HEK293T (cell line): ENCODE measurements at regions of chr2 and their contacts with region 1.

Region 1: GRCh38 chr2:113198790-113199612 is 25.2 kb downstream of the PSD4 start:
- DNase-seq: peak; percentile 89

Region 2: GRCh38 chr2:113080134-113080533 is 118.9 kb before region 1 on chr2:
- CTCF ChIA-PET with region 1: interaction called, 31 read pairs
- POLR2A ChIA-PET with region 1: interaction called, 8 read pairs
- DNase-seq: peak; percentile 65

Region 3: DNA sequence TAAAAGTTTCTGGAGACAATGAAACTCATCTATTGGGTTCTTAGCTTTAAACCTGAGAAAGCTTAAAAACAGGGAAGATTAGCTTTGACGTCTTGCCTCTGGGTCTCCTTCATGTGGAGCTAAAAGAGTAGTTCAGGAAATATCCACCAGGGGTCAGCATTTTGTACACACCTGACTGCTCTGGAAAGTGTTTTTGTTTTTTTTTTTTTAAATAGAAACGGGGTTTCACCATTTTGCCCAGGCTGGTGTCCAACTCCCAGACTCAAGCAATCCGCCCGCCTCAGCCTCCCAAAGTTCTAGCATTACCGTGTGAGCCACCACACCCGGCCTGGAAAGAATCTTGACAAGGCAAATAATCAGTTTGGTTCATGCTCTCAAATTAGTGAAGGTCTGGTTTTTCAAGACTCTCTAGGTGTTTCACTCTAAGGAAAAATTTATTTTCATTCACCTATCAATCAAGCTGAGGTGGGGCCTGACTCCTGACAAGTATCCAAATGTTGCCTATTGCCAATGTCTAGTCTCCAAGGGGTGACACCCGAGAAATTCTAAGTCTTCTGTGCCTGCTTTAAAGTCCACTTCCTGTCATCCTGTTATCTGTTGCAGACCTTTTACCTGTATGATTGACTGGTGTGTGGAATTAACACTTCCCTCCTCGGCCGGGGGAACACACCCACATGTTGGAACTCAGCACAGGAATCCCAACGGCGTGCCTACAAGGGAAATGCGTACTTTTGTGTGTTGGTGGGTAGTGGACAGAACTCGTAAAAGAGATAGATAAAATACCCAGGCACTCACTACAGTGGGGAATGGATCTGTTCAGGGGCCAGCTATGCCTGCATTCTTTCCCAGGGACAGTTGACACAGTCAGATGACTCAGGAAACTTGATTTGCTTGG is 60.3 kb before region 1 on chr2:
- CTCF ChIA-PET with region 1: interaction called, 62 read pairs
- POLR2A ChIA-PET with region 1: interaction called, 8 read pairs
- DNase-seq: peak; percentile 68

Region 4: DNA sequence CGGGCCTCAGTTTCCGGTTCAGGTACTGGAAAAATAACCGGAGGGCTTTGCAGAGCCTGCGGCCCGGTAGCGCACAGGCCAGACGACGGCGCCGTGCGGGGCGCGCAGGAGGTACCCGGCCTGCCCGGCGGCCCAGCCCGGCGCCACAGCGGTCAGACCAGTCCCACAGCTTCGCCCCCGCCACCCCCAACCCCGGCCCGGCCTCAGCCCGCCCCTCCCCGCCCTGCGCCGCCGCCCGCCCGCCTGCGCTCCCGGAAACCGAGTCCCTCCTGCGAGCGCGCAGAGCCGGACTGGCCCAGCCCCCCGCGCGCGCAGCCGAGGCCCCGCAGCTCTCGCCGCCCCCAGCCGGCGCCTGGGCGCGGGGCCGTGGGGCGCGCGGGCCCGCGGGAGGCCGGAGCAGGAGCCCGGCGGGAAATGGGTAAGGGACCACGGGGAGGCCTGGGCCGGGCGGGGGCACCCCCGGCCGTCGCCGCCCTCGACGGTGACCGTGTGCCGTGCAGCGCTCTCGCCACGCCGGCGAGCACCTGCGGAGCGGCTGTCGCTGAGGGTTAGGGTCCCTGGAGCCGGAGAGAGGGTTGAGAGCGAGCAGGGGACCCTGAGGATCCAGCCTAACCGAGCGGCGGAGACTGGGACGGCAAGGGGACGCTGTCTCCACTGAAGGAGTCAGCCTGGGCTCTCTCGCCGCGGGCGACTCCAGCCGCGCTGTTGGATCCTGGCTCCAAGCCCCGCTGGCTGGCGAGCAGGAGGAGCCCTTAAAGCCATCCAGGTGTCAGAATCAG is 41.7 kb before region 1 on chr2:
- CTCF ChIA-PET with region 1: interaction called, 19 read pairs
- POLR2A ChIA-PET with region 1: no interaction called
- DNase-seq: peak; percentile 59

Region 5: DNA sequence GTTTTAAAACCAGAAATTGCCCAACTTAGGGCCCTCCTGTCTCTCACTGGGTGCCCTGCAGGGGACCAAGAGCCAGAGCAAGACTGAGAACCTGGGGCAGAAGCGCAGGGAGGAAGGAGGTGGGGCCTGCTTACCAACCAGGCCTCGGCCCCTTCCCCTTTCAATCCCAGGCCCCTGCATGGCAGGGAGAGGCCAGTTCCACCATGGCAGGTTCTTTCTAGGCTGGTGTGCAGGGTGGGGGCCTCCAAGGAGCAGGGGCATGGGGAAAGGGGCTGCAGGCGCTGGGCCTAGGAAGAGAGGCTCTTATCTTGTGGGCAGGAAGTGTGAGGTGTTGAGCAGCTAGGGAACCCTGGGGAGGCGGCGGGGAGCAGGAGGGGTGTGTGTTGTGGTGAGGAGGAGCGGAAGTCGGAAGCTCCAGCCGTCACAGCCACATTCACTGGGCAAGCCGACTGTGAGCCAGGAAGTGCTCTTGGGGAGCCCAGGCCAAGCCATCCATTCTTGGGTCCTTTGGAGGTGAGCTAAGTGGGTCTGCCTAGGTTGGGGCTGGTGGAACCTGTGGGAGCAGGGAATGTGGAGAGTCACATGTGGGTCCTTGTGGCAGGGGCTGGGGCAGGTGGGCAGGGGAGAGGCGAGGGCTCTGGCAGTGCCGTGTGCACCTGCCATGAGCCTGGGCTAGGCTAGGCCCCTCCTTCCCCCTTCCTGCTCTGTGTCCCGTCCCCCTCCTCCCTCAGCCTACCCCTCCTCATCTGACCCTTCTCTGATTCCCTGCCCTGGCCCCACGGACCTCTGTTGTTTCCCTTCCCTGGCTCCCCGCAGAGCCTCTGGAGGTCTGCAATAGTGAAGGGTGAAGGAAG is 25.2 kb before region 1 on chr2 and contains the start of gene PSD4:
- CTCF ChIA-PET with region 1: interaction called, 16 read pairs
- POLR2A ChIA-PET with region 1: interaction called, 7 read pairs
- DNase-seq: no peak

Region 6: GRCh38 chr2:113390124-113390849 is 191.3 kb after region 1 on chr2:
- CTCF ChIA-PET with region 1: interaction called, 35 read pairs
- POLR2A ChIA-PET with region 1: no interaction called
- DNase-seq: peak; percentile 60